SK-N-SH (cell line): ENCODE measurements at regions of chr1 and their contacts with region 1.

Region 1: GRCh38 chr1:50080909-50081586 is 27.7 kb upstream of the ELAVL4 start:
- DNase-seq: peak; percentile 27
- H3K4me3 ChIP-seq: no peak overlapping the region; a peak in 1 of 4 replicates
- H3K27ac ChIP-seq: no peak overlapping the region; a peak in 1 of 4 replicates
- H3K4me1 ChIP-seq: no peaks in the 10 kb centered on the region; a peak in 1 of 4 replicates
- H3K27me3 ChIP-seq: no peaks in the 10 kb centered on the region
- CTCF ChIP-seq: peak; percentile 50
- EP300 ChIP-seq: no peak
- RAD21 ChIP-seq: peak; percentile 58

Region 2: GRCh38 chr1:50097021-50097679 is 16.1 kb after region 1 on chr1:
- CTCF ChIA-PET with region 1: interaction called, 11 read pairs
- POLR2A ChIA-PET with region 1: no interaction called
- DNase-seq: no peak
- H3K4me3 ChIP-seq: no peak overlapping the region
- H3K27ac ChIP-seq: no peak overlapping the region
- H3K4me1 ChIP-seq: no peaks in the 10 kb centered on the region
- H3K27me3 ChIP-seq: no peaks in the 10 kb centered on the region
- CTCF ChIP-seq: no peak
- EP300 ChIP-seq: no peak
- RAD21 ChIP-seq: no peak